ENCODE measurements at regions of chr14 and their contacts with region 1.

Region 1: DNA sequence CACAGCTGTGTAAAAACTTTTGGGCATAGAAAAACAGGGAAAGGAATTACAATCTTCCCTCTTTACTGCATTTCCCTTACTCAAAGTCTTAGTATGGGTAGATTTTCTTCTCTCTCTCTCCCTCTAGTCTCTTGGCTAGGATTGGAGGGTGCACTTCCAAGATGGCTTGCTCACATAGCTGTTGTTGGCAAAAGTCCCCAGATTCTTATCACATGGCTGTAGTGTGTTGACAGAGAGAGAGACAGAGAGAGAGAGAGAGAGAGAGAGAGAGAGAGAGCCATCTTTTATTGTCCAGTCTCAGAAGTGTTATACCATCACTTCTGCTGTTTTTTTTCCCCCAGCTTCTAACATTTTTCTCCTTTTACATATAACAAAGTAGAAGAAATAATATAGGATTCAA is 6.3 kb upstream of the OR4E2 start:
- DNase-seq: no peak
- H3K4me3 Mint-ChIP-seq: no peak overlapping the region
- H3K27ac Mint-ChIP-seq: no peak overlapping the region
- H3K4me1 Mint-ChIP-seq: no peaks in the 10 kb centered on the region
- H3K27me3 Mint-ChIP-seq: peaks cover 16% of the 10 kb centered on the region

Region 2: DNA sequence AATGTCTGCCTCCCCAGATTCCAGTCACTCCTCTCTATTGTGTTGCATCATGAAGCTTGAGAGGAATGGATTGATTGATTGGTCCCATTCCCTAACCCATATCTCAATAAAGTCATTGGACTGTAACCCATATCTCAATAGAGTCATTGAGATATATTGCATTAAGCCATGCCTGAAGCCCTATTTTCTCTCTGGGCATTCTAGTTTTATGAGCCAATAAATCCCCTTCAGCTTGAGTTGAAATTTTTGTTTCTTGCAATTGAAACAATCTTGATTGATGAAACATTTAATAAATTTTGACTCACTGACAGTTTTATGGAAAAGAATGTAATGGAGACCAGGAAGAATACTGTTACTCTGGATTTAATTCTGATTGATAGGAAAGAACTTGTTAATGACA is 47.0 kb after region 1 on chr14:
- CTCF ChIA-PET with region 1: no interaction called
- POLR2A ChIA-PET with region 1: no interaction called
- intact Hi-C with region 1: no loop called
- DNase-seq: no peak
- H3K4me3 Mint-ChIP-seq: no peak overlapping the region
- H3K27ac Mint-ChIP-seq: no peak overlapping the region
- H3K4me1 Mint-ChIP-seq: no peaks in the 10 kb centered on the region
- H3K27me3 Mint-ChIP-seq: peaks cover 9% of the 10 kb centered on the region

Region 3: DNA sequence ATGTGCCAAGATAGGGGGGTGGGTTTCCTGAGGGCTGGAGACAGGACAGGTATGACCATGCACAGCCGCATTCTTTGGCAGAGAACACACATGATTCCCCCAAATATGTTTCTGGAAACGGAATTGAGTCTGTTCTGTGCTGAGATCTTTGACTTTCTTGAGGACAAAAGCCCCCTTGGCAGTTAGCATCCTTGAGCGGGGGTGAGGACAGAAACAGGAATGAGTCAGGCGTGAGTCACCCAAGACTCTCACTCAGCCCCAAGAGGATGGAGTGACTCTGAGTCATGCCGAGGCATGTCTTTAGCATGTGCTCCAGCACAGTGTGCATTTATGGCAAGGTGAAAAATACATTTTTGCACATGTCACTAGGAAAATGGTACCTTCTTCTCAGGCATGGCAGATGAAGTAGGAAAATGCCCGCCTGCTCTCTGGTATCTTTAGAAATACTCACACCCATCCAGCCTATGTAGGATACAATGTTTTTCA is 889.5 kb after region 1 on chr14:
- CTCF ChIA-PET with region 1: no interaction called
- POLR2A ChIA-PET with region 1: no interaction called
- intact Hi-C with region 1: loop called (anchors 5 kb)
- DNase-seq: peak; percentile 92
- H3K4me3 Mint-ChIP-seq: peak overlapping the region; percentile 81
- H3K27ac Mint-ChIP-seq: peak overlapping the region; percentile 99
- H3K4me1 Mint-ChIP-seq: peaks cover 95% of the 10 kb centered on the region
- H3K27me3 Mint-ChIP-seq: no peaks in the 10 kb centered on the region

Measured in activated CD4-positive, alpha-beta memory T cell treated with anti-CD3 and anti-CD28 coated beads for 36 hours (primary cell).